CD8-positive, alpha-beta T cell (primary cell): ENCODE measurements at regions of chr6 and their contacts with region 1.

Region 1: DNA sequence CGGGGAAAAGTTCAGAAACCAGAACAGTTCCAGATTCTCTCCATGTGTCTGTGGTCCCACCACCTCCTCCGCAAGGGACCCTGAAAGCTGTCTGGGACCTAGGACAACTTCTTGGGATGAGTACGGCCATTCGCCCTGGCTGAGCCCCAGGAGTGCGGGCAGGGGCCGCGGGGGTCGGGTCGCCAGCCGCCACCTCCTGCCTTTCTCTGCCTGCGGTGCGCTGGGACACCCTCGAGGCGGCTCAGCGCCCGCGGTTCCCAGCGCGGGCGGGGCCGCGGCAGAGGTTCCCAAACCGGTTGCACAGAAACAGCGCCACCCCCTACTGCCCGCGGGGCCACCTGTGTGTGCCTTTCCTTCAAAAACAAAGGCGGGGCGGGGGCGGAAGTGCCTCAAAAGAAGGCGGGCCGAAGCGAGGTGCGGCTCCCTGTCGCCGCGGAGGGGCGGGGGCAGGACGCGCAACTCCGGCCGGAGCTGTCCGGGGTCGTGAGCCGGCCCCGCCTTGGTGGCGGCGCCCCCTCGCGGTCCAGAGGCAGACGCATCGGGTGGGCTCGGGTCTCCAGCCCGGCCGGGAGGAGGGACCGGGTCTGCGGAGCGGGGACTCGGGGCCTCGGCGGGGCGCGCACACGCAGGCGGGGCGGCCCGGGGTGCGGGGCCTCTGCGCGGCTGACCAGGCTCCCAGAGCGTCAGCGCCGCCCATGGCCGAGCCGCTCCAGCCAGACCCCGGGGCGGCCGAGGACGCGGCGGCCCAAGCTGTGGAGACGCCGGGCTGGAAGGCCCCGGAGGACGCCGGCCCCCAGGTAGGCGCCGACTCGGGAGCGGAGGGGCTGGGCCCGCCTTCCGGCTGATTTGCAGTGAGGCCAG is at the start of gene HEBP2:
- DNase-seq: peak; percentile 85 to 96 (median 93)
- ATAC-seq: peak; percentile 91
- H3K4me3 ChIP-seq: peak within 1 kb of the TSS; percentile 63 to 85
- H3K4me3 Mint-ChIP-seq: peak within 1 kb of the TSS; percentile 90
- H3K27ac ChIP-seq: peak within 1 kb of the TSS; percentile 63 to 85
- H3K27ac Mint-ChIP-seq: peak within 1 kb of the TSS; percentile 97
- H3K4me1 ChIP-seq: peaks cover 15% of the 10 kb centered on the region
- H3K4me1 Mint-ChIP-seq: peaks cover 23% of the 10 kb centered on the region
- H3K27me3 ChIP-seq: no peaks in the 10 kb centered on the region
- H3K27me3 Mint-ChIP-seq: no peaks in the 10 kb centered on the region
- CTCF ChIP-seq: peak; percentile 23
- total RNA-seq, gene HEBP2: 64.6 to 69.1 TPM

Region 2: GRCh38 chr6:136822376-136823127 is 1581.5 kb before region 1 on chr6 and contains the start of gene PEX7:
- CTCF ChIA-PET with region 1: no interaction called
- POLR2A ChIA-PET with region 1: no interaction called
- intact Hi-C with region 1: loop called in 1 of 2 experiments (anchors 10 kb)
- DNase-seq: peak; percentile 76 to 94 (median 84)
- ATAC-seq: peak; percentile 91
- H3K4me3 ChIP-seq: peak within 1 kb of the TSS; percentile 57 to 77
- H3K4me3 Mint-ChIP-seq: peak within 1 kb of the TSS; percentile 93
- H3K27ac ChIP-seq: peak within 1 kb of the TSS; percentile 70 to 82
- H3K27ac Mint-ChIP-seq: peak within 1 kb of the TSS; percentile 95
- H3K4me1 ChIP-seq: peaks cover 14% of the 10 kb centered on the region
- H3K4me1 Mint-ChIP-seq: peaks cover 30% of the 10 kb centered on the region
- H3K27me3 ChIP-seq: no peaks in the 10 kb centered on the region
- H3K27me3 Mint-ChIP-seq: peaks cover 3% of the 10 kb centered on the region
- CTCF ChIP-seq: peak; percentile 68
- total RNA-seq, gene PEX7: 2.6 to 2.8 TPM

Region 3: DNA sequence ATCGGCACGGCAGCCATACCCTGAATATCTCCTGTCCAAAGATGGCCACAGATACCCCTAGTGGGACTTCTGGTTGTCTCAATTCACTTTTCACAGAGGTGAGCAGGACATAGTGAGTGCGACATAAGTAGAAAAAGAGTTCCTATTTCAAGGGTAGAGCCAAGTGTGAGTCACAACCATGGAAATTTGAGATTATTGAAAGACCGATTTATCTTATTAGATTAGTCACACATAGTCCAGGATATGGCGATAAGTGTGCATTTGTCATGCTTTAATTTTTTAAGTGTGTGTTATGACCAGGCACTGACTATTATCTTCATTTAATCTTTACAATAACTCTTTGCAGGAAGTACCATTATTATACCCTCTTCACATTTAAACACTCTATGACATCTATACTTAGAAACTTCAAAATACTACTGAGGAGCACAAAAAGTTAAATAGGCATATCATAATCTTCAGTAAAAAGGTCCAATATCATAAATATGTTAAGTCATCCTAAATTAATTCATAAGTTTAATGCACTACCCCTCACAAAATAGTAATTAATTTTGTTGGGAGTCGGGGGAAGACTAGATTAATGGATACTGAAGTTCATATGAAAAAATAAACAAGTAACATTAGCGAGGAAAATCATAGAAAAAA is 550.3 kb before region 1 on chr6:
- CTCF ChIA-PET with region 1: no interaction called
- POLR2A ChIA-PET with region 1: no interaction called
- intact Hi-C with region 1: no loop called
- DNase-seq: no peak
- ATAC-seq: no peak
- H3K4me3 ChIP-seq: no peak overlapping the region
- H3K4me3 Mint-ChIP-seq: no peak overlapping the region
- H3K27ac ChIP-seq: no peak overlapping the region
- H3K27ac Mint-ChIP-seq: no peak overlapping the region
- H3K4me1 ChIP-seq: no peaks in the 10 kb centered on the region
- H3K4me1 Mint-ChIP-seq: no peaks in the 10 kb centered on the region
- H3K27me3 ChIP-seq: no peaks in the 10 kb centered on the region
- H3K27me3 Mint-ChIP-seq: no peaks in the 10 kb centered on the region
- CTCF ChIP-seq: no peak

Region 4: DNA sequence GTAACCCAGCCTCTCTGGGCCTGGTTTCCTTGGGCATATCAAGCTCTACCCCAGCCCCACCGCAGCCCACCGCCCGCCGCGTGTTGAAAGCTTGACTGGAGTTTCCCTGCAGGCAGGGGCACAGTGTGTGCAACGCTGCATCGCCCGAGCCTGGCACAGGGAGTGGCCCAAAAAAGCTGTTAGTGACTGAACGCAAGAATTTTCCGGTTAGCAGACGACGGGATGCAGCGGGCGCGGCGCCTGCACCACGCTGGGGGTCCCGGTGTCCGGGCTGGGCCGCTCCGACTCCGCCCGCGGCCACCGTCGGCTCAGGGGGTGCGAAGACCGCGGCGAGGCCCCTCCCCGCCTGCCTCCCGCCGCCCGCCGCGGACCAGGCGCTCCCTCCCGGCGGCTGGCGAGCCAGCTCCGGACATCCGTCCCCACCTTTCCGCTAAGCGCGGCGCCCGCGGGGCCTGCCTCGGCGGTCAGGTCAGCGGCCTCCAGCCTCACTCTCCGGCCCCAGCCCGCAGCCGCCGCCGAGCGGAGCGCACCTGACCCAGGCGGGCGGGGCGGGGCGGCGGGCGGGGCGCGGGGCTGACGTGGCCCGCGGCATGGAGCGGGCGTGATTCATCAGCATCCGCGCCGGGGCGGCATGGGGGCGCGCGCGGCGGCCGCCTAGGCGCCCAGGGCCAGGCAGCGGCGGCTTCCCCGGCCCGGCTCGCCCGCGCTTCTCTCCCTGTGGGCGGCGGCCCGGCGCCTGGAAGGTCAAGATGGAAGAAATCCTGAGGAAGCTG is 242.5 kb before region 1 on chr6 and contains the start of gene ARFGEF3:
- CTCF ChIA-PET with region 1: no interaction called
- POLR2A ChIA-PET with region 1: no interaction called
- intact Hi-C with region 1: loop called in 1 of 2 experiments (anchors 5 kb)
- DNase-seq: peak in 8 of 9 experiments; percentile 36 to 63 (median 48)
- ATAC-seq: peak; percentile 91
- H3K4me3 ChIP-seq: peak within 1 kb of the TSS; percentile 29 to 34
- H3K4me3 Mint-ChIP-seq: peak within 1 kb of the TSS; percentile 70
- H3K27ac ChIP-seq: no peak within 1 kb of the TSS
- H3K27ac Mint-ChIP-seq: no peak within 1 kb of the TSS
- H3K4me1 ChIP-seq: peaks cover 8% of the 10 kb centered on the region
- H3K4me1 Mint-ChIP-seq: peaks cover 8% of the 10 kb centered on the region
- H3K27me3 ChIP-seq: peaks cover 18 to 20% of the 10 kb centered on the region in 2 experiments
- H3K27me3 Mint-ChIP-seq: peaks cover 57% of the 10 kb centered on the region
- CTCF ChIP-seq: no peak
- total RNA-seq, gene ARFGEF3: not detected

Region 5: DNA sequence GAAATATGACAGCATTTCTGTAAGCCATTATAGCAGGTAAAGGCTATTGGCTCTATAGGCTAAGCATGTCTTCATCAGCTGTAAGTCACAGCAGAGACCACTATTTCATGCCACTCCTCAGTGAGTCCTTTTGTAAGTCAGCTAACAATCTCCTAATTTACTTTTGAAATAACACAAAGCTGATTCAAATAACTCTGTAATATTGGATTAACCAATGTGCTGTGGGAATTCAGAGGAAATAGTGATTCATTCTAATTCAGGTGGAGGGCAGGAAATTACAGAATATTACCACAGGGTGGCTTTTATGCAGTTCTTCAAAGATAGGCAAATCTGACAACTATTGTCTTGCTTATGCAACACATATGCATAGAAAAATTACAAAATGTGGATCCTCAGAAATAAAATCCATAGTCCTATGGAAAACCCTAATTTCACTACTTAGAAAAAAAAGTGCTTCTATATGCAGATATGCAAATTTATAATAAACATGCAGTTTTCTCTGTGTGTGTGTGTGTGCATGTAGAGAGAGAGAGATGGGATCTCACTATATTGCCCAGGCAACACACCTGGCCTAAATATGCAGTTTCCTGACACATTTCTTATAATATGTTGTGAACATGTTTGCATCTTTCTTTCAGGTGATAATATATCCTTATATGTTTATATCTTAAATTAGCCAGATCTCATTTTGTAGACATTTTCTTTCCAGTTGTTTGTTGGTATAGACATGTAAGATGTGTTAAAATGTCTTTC is 31.1 kb before region 1 on chr6:
- CTCF ChIA-PET with region 1: interaction called, 11 read pairs
- POLR2A ChIA-PET with region 1: no interaction called
- intact Hi-C with region 1: loop called in 1 of 2 experiments (anchors 1 kb)
- DNase-seq: peak in 1 of 9 experiments; percentile 23
- ATAC-seq: no peak
- H3K4me3 ChIP-seq: no peak overlapping the region
- H3K4me3 Mint-ChIP-seq: no peak overlapping the region
- H3K27ac ChIP-seq: no peak overlapping the region
- H3K27ac Mint-ChIP-seq: no peak overlapping the region
- H3K4me1 ChIP-seq: no peaks in the 10 kb centered on the region
- H3K4me1 Mint-ChIP-seq: no peaks in the 10 kb centered on the region
- H3K27me3 ChIP-seq: no peaks in the 10 kb centered on the region
- H3K27me3 Mint-ChIP-seq: peaks cover 2% of the 10 kb centered on the region
- CTCF ChIP-seq: peak; percentile 8

Region 6: GRCh38 chr6:138455746-138456400 is 51.8 kb after region 1 on chr6:
- CTCF ChIA-PET with region 1: no interaction called
- POLR2A ChIA-PET with region 1: interaction called, 13 read pairs
- intact Hi-C with region 1: no loop called
- DNase-seq: peak in 3 of 9 experiments; percentile 46 to 66 (median 61)
- ATAC-seq: peak; percentile 68
- H3K4me3 ChIP-seq: peak overlapping the region; percentile 1 to 40
- H3K4me3 Mint-ChIP-seq: peak overlapping the region; percentile 75
- H3K27ac ChIP-seq: peak overlapping the region; percentile 20 to 53
- H3K27ac Mint-ChIP-seq: peak overlapping the region; percentile 89
- H3K4me1 ChIP-seq: peaks cover 16% of the 10 kb centered on the region
- H3K4me1 Mint-ChIP-seq: peaks cover 26% of the 10 kb centered on the region
- H3K27me3 ChIP-seq: no peaks in the 10 kb centered on the region
- H3K27me3 Mint-ChIP-seq: no peaks in the 10 kb centered on the region
- CTCF ChIP-seq: no peak

Region 7: DNA sequence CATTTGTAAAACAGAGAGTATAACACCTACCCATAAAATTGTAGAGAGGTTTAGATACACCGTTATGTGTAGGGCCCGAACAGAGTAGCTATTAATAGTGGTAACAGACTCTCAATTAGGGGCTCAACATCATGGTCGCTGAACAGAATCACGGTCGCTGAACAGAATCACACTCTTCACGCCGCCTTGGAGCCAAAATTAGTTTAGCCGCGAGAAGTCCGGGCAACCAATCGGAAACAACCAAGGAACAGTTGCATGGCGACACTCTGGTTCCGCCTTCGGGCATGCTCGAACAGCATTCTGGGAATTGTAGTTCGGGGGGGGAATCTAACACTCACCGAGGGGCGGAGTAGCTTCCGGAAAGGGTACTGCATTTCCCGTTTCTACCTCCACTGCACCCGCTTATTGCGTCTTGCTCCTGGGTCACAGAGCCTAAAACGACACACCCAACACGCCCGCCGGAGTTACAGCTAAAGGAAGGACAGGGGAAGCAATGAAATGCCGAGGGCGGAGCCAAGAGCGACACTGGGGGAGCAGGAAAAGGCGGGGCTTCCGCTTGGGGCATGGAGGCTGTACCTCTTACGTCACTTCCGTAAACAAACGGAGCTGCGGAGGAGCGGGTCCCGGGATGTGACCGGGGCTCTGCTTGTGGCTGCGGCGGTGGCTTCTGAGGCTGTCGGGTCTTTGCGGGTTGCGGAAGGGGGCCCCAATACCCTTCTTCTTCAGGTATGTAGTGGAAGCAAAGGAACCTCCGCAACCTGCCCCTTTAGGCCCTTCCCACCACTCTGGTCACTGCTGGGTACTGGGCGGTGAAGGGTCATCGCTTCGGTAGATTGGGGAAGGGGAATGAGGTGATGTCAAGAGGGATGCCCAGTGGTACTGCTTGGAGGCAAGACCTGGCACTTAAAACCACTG is 369.4 kb after region 1 on chr6 and contains the start of gene CCDC28A:
- CTCF ChIA-PET with region 1: interaction called, 3 read pairs
- POLR2A ChIA-PET with region 1: interaction called, 7 read pairs
- intact Hi-C with region 1: loop called (anchors 1 to 5 kb)
- DNase-seq: peak; percentile 87 to 97 (median 92)
- ATAC-seq: peak; percentile 84
- H3K4me3 ChIP-seq: peak within 1 kb of the TSS; percentile 68 to 90
- H3K4me3 Mint-ChIP-seq: peak within 1 kb of the TSS; percentile 100
- H3K27ac ChIP-seq: peak within 1 kb of the TSS; percentile 88 to 96
- H3K27ac Mint-ChIP-seq: peak within 1 kb of the TSS; percentile 100
- H3K4me1 ChIP-seq: peaks cover 19% of the 10 kb centered on the region
- H3K4me1 Mint-ChIP-seq: peaks cover 33% of the 10 kb centered on the region
- H3K27me3 ChIP-seq: no peaks in the 10 kb centered on the region
- H3K27me3 Mint-ChIP-seq: no peaks in the 10 kb centered on the region
- CTCF ChIP-seq: no peak
- total RNA-seq, gene CCDC28A: 38.2 to 39.4 TPM